ENCODE measurements at regions of chr9 and their contacts with region 1.

Region 1: GRCh38 chr9:133683586-133684120 is 47.5 kb downstream of the DBH start:
- DNase-seq: peak; percentile 90
- ATAC-seq: peak; percentile 88
- H3K4me3 Mint-ChIP-seq: peak overlapping the region; percentile 55
- H3K27ac Mint-ChIP-seq: peak overlapping the region; percentile 97
- H3K4me1 Mint-ChIP-seq: peaks cover 31% of the 10 kb centered on the region
- H3K27me3 Mint-ChIP-seq: no peaks in the 10 kb centered on the region

Region 2: DNA sequence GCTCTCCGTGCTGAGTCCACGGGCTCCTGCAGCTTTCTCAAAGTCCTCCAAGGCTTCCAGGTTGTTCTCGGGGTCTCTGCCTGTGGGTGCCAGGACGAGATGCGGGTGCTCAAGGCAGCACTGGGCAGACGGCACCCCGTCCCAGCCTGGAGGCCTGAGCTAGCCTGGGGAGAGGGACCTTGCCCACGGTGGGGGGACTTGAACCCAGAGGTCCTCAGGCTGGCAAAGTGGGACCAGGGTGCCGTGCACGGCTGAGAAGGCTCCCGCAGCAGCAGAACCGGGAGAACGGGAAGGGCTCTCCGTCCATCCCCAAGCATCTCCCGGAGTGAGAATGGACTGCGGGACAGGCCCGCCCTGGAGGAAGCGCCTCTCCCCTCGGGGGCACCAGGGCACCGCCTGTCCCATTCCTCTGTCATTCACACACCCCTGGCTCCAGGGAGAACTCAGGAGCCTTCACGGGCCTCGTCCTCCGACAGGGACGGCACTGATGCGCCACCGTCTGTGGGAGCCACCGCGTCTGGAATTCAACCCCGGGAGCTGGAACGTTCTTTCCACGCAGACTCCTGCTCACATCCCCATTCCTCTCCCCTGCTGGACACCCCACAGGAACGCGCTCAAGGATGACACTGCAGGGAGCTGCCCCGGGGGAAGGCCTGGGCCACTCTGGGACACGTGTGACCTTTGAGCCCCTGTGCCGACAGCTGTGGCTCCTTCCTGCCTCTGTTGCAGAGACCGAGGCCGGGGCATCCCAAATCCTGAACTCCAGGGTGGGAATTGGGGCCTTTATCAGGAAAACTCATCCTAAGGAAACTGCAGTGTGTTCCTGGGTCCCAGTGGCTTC is 458.3 kb before region 1 on chr9:
- CTCF ChIA-PET with region 1: no interaction called
- DNase-seq: peak; percentile 33
- ATAC-seq: no peak
- H3K4me3 Mint-ChIP-seq: no peak overlapping the region
- H3K27ac Mint-ChIP-seq: no peak overlapping the region
- H3K4me1 Mint-ChIP-seq: peaks cover 6% of the 10 kb centered on the region
- H3K27me3 Mint-ChIP-seq: peaks cover 19% of the 10 kb centered on the region

Region 3: DNA sequence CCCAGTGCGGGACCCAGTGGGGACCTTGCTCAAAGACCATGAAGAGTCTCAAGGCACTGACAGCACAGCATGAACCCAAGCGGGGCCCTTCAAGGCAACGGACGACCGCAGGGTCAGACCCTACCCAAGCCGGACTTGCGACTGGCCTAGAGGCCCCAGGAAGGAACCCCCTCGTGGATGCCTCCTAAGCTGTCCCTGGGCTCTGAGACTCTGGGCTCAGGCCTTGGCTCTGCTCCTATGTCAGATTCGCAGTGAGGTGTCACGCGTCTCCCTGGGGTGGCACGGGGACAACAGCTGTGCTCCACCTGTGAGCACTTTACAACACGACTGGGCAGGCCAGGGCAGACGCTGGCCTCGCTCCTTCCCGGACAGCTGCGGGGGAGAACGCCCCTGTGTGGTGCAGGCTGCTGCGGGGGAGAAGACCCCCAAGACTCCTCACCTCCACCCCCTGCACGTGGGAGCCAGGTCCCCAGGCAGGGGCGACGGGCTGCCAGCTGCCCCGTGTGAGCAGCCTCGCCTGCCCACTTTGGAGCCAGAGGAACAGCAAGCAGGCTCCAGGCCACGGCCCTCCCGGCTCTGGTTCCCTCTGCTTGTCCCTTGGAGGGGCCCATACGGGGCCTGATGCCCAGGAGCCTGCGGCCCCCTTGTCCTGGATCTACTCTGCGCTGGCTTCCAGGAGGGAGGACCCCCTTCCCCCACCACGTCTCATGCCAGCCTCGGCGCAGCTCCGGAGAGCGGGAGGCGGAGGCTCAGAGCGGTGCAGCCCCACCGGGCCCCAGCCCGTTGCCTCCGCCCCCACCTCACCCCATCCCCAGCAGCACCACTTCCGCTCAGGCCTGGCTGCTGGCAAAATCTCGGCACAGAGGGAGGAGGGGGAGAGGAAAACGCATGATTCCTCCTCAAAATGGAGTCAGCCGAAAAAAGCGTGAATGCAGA is 18.5 kb after region 1 on chr9:
- CTCF ChIA-PET with region 1: interaction called, 16 read pairs
- DNase-seq: peak; percentile 66
- ATAC-seq: peak; percentile 91
- H3K4me3 Mint-ChIP-seq: peak overlapping the region; percentile 53
- H3K27ac Mint-ChIP-seq: no peak overlapping the region
- H3K4me1 Mint-ChIP-seq: peaks cover 24% of the 10 kb centered on the region
- H3K27me3 Mint-ChIP-seq: peaks cover 13% of the 10 kb centered on the region